Activated CD8-positive, alpha-beta T cell treated with anti-CD3 and anti-CD28 coated beads, Interleukin-2, amount 10 ng/mL, durations not matched to agents 7 days and 5 days (primary cell): ENCODE measurements at regions of chr15 and their contacts with region 1.

Region 1: GRCh38 chr15:81000624-81001151 is at the start of gene TLNRD1:
- DNase-seq: peak; percentile 92
- ATAC-seq: peak; percentile 66
- H3K4me3 Mint-ChIP-seq: peak within 1 kb of the TSS; percentile 90
- H3K27ac Mint-ChIP-seq: peak within 1 kb of the TSS; percentile 96
- H3K4me1 Mint-ChIP-seq: peaks cover 56% of the 10 kb centered on the region
- H3K27me3 Mint-ChIP-seq: no peaks in the 10 kb centered on the region
- total RNA-seq, gene TLNRD1: 32.3 to 33.8 TPM

Region 2: DNA sequence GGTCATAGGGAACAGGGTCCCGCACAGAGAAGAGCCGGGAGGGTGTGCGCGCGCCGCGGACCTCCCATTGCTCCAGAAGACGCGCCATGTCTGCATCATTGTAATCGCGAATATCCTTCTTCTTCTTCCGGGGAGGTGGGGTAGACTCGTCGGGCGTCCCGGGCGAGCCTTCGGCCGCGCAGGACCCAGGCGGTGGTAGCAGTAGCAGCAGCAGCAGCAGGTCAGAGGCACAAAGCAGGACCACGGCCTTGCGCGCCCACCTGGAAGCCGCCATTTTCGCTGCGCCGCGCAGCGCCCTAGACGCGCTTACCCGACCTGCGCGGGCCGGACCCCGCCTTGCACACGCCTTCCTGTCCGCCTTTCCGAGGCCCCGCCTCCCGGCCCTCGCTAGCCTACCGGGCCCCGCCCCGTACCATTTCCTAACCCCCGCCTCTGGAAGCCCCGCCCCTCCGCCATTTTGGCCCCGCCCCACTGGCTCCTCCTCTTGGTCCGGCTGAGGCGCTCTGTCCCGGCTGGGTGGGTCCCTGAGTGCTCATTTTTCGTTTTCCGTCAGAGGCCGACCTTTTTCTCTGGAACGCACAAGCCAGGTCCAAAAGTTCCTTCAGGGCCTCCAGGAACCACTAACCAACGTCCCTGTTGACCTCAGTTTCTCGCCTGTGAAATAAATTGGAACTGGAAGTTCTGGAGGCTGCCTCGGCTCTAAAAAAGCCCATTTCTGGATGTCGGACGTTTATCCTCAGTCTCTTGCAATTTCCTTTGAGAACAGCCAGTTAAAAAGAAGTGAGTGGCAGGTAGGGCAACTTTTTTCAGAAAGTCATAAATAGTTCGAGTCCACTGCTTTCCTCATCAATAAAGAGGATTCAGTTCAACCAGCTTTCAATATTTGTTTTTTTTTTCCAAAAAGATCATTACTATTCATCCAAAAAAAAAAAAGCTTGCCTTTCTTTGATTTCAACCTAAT is 10.9 kb before region 1 on chr15 and contains the start of gene MESD:
- CTCF ChIA-PET with region 1: interaction called, 11 read pairs
- POLR2A ChIA-PET with region 1: interaction called, 49 read pairs
- DNase-seq: peak; percentile 98
- ATAC-seq: peak; percentile 99
- H3K4me3 Mint-ChIP-seq: peak within 1 kb of the TSS; percentile 97
- H3K27ac Mint-ChIP-seq: peak within 1 kb of the TSS; percentile 98
- H3K4me1 Mint-ChIP-seq: peaks cover 62% of the 10 kb centered on the region
- H3K27me3 Mint-ChIP-seq: no peaks in the 10 kb centered on the region
- total RNA-seq, gene MESD: 27.0 to 27.4 TPM

Region 3: GRCh38 chr15:81229586-81229985 is 228.9 kb after region 1 on chr15:
- CTCF ChIA-PET with region 1: no interaction called
- POLR2A ChIA-PET with region 1: no interaction called
- DNase-seq: no peak
- ATAC-seq: no peak
- H3K4me3 Mint-ChIP-seq: no peak overlapping the region
- H3K27ac Mint-ChIP-seq: no peak overlapping the region
- H3K4me1 Mint-ChIP-seq: no peaks in the 10 kb centered on the region
- H3K27me3 Mint-ChIP-seq: no peaks in the 10 kb centered on the region